HCT116 (cell line): ENCODE measurements at regions of chr5 and their contacts with region 1.

Region 1: DNA sequence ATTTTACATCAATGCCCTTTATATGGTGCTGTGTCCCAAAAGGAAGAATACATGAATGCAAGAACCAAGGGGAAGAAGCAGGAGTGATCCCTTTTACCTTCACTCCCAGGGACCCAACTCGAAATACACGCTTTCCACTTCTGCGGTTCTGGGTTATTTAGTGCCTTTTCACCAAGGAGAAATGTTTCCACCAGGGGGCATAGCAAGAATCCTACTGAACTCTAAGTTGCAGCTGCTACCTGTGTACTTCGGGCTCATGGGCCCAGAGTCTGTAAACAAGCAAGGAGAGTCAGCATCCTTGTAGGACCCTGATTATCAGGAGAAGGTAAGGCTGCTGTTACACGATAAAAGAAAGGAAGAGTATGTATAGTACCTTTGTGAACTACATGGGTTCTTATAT is 45.7 kb downstream of the DPYSL3 start:
- DNase-seq: peak; percentile 19
- ATAC-seq: peak; percentile 75
- H3K4me3 ChIP-seq: no peak overlapping the region
- H3K27ac ChIP-seq: no peak overlapping the region
- H3K4me1 ChIP-seq: no peaks in the 10 kb centered on the region
- H3K27me3 ChIP-seq: no peaks in the 10 kb centered on the region
- CTCF ChIP-seq: peak; percentile 37 to 59 (median 48); a peak in 4 of 6 replicates
- POLR2A ChIP-seq: no peak
- RAD21 ChIP-seq: peak; percentile 55

Region 2: GRCh38 chr5:145637396-145637795 is 1826.8 kb before region 1 on chr5:
- CTCF ChIA-PET with region 1: no interaction called
- POLR2A ChIA-PET with region 1: no interaction called
- RAD21 ChIA-PET with region 1: no interaction called
- intact Hi-C with region 1: no loop called
- DNase-seq: no peak
- ATAC-seq: no peak
- H3K4me3 ChIP-seq: no peak overlapping the region
- H3K27ac ChIP-seq: no peak overlapping the region
- H3K4me1 ChIP-seq: no peaks in the 10 kb centered on the region
- H3K27me3 ChIP-seq: no peaks in the 10 kb centered on the region
- CTCF ChIP-seq: no peak
- POLR2A ChIP-seq: no peak
- RAD21 ChIP-seq: no peak

Region 3: DNA sequence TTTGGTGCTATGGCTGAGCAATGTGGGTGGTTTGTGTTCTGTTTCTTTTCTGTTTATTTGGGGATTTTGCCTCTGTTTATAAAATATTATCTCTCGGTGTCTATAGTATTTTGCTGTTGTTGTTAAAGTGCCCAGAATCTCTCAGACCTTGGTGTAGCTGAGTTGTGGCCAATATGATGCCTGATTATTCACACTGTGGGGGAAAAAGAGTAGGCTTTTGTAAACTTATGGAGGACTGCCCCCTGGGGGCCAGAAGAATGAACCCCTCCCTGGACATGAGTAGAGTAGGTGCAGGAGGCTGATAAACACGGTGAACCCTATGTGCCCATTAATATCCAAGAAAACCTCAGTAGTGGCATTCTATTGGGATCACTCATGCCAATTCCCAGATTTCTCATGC is 94.6 kb after region 1 on chr5:
- CTCF ChIA-PET with region 1: interaction called, 12 read pairs
- POLR2A ChIA-PET with region 1: no interaction called
- RAD21 ChIA-PET with region 1: no interaction called
- intact Hi-C with region 1: loop called (anchors 2 kb)
- DNase-seq: no peak
- ATAC-seq: peak; percentile 76
- H3K4me3 ChIP-seq: no peak overlapping the region
- H3K27ac ChIP-seq: no peak overlapping the region
- H3K4me1 ChIP-seq: no peaks in the 10 kb centered on the region
- H3K27me3 ChIP-seq: 0 out of 2 replicates have a peak, but pooled peaks cover 7% of the 10 kb centered on the region
- CTCF ChIP-seq: peak; percentile 35 to 52 (median 46); a peak in 4 of 6 replicates
- POLR2A ChIP-seq: no peak
- RAD21 ChIP-seq: peak; percentile 57

Region 4: DNA sequence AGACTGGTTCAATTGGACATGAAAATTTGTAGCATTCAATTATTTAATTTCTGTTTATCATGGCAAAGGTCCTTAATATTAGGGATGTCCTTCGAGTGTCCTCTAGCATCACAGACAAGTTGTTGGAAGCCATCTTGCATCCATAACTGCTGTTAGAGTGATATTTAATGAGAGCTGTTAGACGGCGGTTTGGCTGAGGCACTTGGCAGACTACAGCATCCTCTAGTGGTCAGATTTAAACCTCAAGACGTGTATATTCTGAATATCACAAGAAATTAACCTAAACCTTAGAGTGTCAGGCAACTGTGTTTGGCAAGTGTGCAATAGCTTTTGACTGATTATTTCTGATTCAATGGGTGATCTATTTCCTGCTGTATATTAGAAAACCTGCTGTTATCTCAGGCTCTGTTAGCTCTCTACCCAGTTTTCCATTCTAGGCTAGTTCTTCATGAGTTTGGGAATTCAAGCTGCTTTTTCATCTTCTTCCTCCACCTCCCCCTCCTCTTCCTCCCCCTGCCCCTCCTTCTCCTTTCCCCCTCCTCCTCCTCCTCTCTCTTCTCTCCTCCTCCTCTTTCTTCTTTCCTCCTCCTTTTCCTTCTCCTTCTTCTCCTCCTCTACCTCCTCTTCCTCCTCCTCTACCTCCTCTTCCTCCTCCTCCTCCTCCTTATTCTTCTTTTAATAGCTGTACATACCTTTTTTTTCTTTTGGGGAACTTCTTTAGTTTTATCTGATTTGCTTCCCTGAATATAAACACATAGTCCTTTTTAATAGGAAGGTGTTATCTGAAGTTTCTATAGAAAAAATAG is 358.7 kb after region 1 on chr5:
- CTCF ChIA-PET with region 1: no interaction called
- POLR2A ChIA-PET with region 1: no interaction called
- RAD21 ChIA-PET with region 1: no interaction called
- intact Hi-C with region 1: loop called (anchors 10 kb)
- DNase-seq: peak; percentile 60
- ATAC-seq: peak; percentile 96
- H3K4me3 ChIP-seq: no peak overlapping the region
- H3K27ac ChIP-seq: no peak overlapping the region
- H3K4me1 ChIP-seq: no peaks in the 10 kb centered on the region
- H3K27me3 ChIP-seq: peaks cover 17% of the 10 kb centered on the region
- CTCF ChIP-seq: peak; percentile 72 to 93 (median 73)
- POLR2A ChIP-seq: no peak
- RAD21 ChIP-seq: peak; percentile 92